ENCODE measurements at regions of chr2 and their contacts with region 1.

Region 1: GRCh38 chr2:209556354-209556961 is 132.6 kb downstream of the MAP2 start:
- DNase-seq: no peak
- ATAC-seq: peak; percentile 65 to 77

Region 2: GRCh38 chr2:209423562-209424198 is 132.8 kb before region 1 on chr2 and contains the start of gene MAP2:
- intact Hi-C with region 1: loop called in 1 of 2 experiments (anchors 10 kb)
- DNase-seq: peak; percentile 85
- ATAC-seq: peak; percentile 98 to 99
- total RNA-seq, gene MAP2: 4.7 to 6.6 TPM

Region 3: GRCh38 chr2:209600361-209601171 is 44.1 kb after region 1 on chr2:
- intact Hi-C with region 1: no loop called
- DNase-seq: no peak
- ATAC-seq: no peak

Region 4: GRCh38 chr2:209772290-209772685 is 215.8 kb after region 1 on chr2:
- intact Hi-C with region 1: no loop called
- DNase-seq: no peak
- ATAC-seq: no peak